ENCODE measurements at regions of chr4 and their contacts with region 1.

Region 1: GRCh38 chr4:121736735-121737351 is 28.1 kb downstream of the SMIM43 start:
- DNase-seq: peak; percentile 72
- H3K4me3 ChIP-seq: no peak overlapping the region
- H3K27ac ChIP-seq: no peak overlapping the region
- H3K4me1 ChIP-seq: no peaks in the 10 kb centered on the region
- H3K27me3 ChIP-seq: no peaks in the 10 kb centered on the region
- CTCF ChIP-seq: peak; percentile 69

Region 2: GRCh38 chr4:121462660-121463261 is 274.1 kb before region 1 on chr4:
- CTCF ChIA-PET with region 1: interaction called, 6 read pairs
- POLR2A ChIA-PET with region 1: no interaction called
- intact Hi-C with region 1: loop called (anchors 2 kb)
- DNase-seq: peak; percentile 88
- H3K4me3 ChIP-seq: no peak overlapping the region
- H3K27ac ChIP-seq: no peak overlapping the region
- H3K4me1 ChIP-seq: peaks cover 3% of the 10 kb centered on the region
- H3K27me3 ChIP-seq: no peaks in the 10 kb centered on the region
- CTCF ChIP-seq: peak; percentile 83

Region 3: DNA sequence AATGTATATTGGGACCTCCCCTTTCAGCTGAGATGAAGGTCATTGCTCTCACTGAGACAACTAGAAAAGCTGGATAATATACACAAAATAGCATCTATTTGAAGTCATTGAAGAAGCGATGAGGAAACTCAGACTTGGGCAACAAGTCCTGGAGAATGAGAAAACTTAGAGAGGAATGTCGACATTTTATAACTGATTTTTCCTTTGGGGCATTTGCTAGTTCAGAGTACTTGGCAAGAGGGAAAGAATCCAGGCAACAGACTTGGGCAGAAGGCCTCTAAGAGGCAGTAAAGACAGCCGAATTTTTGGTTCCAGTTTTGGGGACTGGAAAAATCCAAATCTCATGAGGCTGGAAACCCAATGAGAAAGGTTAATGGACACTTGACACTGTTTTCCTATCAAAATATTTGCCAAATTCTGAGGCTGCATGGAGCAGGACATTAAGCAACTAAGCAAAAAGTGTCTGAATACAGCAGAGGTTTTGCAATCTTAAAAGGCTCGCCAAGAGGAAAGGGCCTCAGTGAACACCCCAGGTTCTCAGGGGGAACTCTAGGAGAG is 19.1 kb before region 1 on chr4:
- CTCF ChIA-PET with region 1: no interaction called
- POLR2A ChIA-PET with region 1: no interaction called
- intact Hi-C with region 1: no loop called
- DNase-seq: no peak
- H3K4me3 ChIP-seq: no peak overlapping the region
- H3K27ac ChIP-seq: no peak overlapping the region
- H3K4me1 ChIP-seq: peaks cover 4% of the 10 kb centered on the region
- H3K27me3 ChIP-seq: no peaks in the 10 kb centered on the region
- CTCF ChIP-seq: no peak